ENCODE measurements at regions of chr9 and their contacts with region 1.

Region 1: DNA sequence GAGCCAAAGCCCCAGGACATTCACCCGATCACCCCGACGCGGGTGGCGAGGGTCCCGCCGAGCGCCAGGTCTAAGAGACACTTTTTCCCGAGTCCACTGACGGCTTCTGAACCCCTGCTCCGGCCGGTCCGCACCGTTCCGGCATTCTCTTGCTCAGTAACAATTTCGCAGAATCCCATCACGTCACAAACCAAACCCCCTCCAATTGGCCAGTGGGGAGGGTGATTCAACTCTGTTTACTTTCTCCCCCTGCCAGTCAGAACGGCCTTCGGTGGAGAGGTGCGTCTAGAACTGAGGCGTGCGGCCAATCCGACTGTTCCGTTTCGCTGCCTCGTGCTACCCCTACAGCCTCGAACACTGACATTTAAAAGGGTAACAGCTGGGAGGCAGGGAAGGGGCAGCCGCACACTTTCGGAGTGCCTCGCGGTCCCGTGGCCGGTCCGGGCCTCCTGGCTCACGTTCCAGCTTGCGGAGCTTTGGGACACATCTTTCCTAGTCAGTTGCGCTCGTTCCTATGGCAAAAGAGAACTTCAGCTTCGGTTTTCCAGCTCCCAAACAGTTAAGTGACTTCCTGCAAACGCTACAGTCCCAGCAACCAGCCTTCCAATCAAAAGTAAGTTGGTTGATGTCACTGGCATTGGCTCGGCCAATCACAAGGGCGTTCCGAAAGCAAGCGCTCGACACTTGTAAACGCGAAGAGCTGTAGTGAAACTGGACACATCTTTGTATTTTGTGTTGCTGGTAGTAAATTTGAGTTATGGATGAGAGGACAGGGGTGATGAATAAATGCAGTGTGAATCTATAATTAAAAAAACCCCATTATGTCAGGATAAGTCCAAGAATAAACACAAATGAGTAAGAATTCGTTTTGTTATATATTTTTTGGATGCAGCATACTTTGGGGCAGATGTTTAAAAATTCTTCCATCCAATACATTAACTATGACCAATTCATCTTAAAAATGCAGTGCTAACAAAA is at the start of gene KLF9:
- DNase-seq: peak; percentile 92
- H3K4me3 Mint-ChIP-seq: peak within 1 kb of the TSS; percentile 95
- H3K27ac Mint-ChIP-seq: peak within 1 kb of the TSS; percentile 100
- H3K4me1 Mint-ChIP-seq: peaks cover 41% of the 10 kb centered on the region
- H3K27me3 Mint-ChIP-seq: no peaks in the 10 kb centered on the region
- total RNA-seq, gene KLF9: 13.5 and 13.7 TPM in 2 replicates

Region 2: GRCh38 chr9:69759421-69760277 is 654.4 kb before region 1 on chr9 and contains the start of gene PTAR1:
- intact Hi-C with region 1: loop called (anchors 5 kb)
- DNase-seq: peak; percentile 87
- H3K4me3 Mint-ChIP-seq: peak within 1 kb of the TSS; percentile 97
- H3K27ac Mint-ChIP-seq: peak within 1 kb of the TSS; percentile 94
- H3K4me1 Mint-ChIP-seq: peaks cover 25% of the 10 kb centered on the region
- H3K27me3 Mint-ChIP-seq: no peaks in the 10 kb centered on the region
- total RNA-seq, gene PTAR1: 51.1 and 57.2 TPM in 2 replicates

Region 3: DNA sequence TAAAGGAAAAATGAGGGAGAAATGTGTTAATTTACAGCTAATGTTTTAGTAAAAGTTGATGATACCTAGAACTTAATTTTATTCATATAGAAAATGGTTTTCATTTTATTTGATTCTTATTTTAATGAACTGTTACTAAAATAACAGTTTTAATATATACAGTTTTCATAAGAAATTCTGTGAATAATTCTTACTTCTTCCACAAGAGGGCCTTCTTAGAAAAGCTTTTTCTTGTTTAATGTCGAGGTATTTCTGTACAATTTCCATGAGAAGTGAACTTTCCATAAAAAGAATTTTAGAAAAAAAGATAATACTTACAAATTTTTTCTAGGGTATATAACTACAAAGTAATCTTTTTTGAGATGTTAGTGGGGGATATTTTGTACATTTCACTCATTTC is 73.5 kb before region 1 on chr9:
- intact Hi-C with region 1: loop called (anchors 5 kb)
- DNase-seq: no peak
- H3K4me3 Mint-ChIP-seq: no peak overlapping the region
- H3K27ac Mint-ChIP-seq: no peak overlapping the region
- H3K4me1 Mint-ChIP-seq: peaks cover 10% of the 10 kb centered on the region
- H3K27me3 Mint-ChIP-seq: no peaks in the 10 kb centered on the region

Region 4: GRCh38 chr9:70451765-70452164 is 37.7 kb after region 1 on chr9:
- intact Hi-C with region 1: no loop called
- DNase-seq: no peak
- H3K4me3 Mint-ChIP-seq: no peak overlapping the region
- H3K27ac Mint-ChIP-seq: no peak overlapping the region
- H3K4me1 Mint-ChIP-seq: no peaks in the 10 kb centered on the region
- H3K27me3 Mint-ChIP-seq: peaks cover 6% of the 10 kb centered on the region

Region 5: GRCh38 chr9:70466976-70467561 is 53.0 kb after region 1 on chr9:
- intact Hi-C with region 1: loop called (anchors 5 kb)
- DNase-seq: no peak
- H3K4me3 Mint-ChIP-seq: no peak overlapping the region
- H3K27ac Mint-ChIP-seq: peak overlapping the region; percentile 72
- H3K4me1 Mint-ChIP-seq: peaks cover 35% of the 10 kb centered on the region
- H3K27me3 Mint-ChIP-seq: no peaks in the 10 kb centered on the region

Region 6: GRCh38 chr9:70484210-70485130 is 70.4 kb after region 1 on chr9:
- intact Hi-C with region 1: no loop called
- DNase-seq: no peak
- H3K4me3 Mint-ChIP-seq: no peak overlapping the region
- H3K27ac Mint-ChIP-seq: no peak overlapping the region
- H3K4me1 Mint-ChIP-seq: peaks cover 2% of the 10 kb centered on the region
- H3K27me3 Mint-ChIP-seq: no peaks in the 10 kb centered on the region

Region 7: DNA sequence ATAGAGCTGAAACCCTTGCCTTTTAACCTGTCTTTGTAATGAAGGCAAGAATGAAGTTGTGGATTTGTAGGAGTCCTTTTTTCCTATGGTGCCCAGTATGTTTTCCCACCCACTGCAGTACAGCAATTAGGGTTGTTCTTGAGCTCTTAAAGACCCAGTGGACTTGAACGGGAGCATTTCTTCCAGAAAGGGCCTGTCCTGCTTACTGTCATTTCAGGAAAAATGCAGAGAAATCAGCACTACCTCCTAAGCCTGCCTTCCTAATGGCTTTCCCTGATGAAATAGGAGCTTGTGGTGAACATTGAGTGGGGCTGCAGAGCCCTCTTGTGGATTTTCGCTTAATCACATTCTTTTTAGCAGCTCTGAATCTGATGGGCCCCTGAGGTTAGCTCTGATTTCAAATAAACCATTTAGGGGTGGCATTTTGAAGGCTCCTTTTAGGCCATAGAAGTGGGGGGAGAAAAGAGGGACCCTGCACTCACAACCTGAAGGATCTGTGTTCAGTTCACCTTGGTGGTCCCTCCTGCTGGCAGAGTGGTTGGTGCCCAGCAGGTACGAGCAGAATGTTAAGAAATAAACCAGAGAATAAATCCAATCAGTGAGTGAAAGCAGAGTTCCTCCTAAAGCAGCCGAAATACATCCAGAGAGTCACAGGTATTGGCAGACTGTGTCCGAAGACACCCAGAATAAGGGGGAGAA is 188.4 kb after region 1 on chr9:
- intact Hi-C with region 1: loop called (anchors 5 kb)
- DNase-seq: peak; percentile 14
- H3K4me3 Mint-ChIP-seq: no peak overlapping the region
- H3K27ac Mint-ChIP-seq: no peak overlapping the region
- H3K4me1 Mint-ChIP-seq: peaks cover 1% of the 10 kb centered on the region
- H3K27me3 Mint-ChIP-seq: no peaks in the 10 kb centered on the region

Region 8: GRCh38 chr9:71897577-71897976 is 1483.5 kb after region 1 on chr9:
- intact Hi-C with region 1: loop called (anchors 5 kb)
- DNase-seq: no peak
- H3K4me3 Mint-ChIP-seq: peak overlapping the region; percentile 2
- H3K27ac Mint-ChIP-seq: peak overlapping the region; percentile 38
- H3K4me1 Mint-ChIP-seq: peaks cover 76% of the 10 kb centered on the region
- H3K27me3 Mint-ChIP-seq: no peaks in the 10 kb centered on the region

Measured in activated T-helper 2 cell treated with anti-CD3 and anti-CD28 coated beads, Interferon-gamma antibody, Interleukin-2, Interleukin-4, amounts not matched to agents 10 μg/mL and 5 μg/mL and 100 μg/mL, durations not matched to agents 14 hours and 24 hours and 36 hours (primary cell).